Astrocyte of the cerebellum (primary cell): ENCODE measurements at regions of chr1 and their contacts with region 1.

Region 1: GRCh38 chr1:39098546-39099250 is 72.5 kb downstream of the NDUFS5 start:
- DNase-seq: peak; percentile 79
- H3K4me3 ChIP-seq: no peak overlapping the region
- CTCF ChIP-seq: peak; percentile 75

Region 2: GRCh38 chr1:38873027-38873969 is 225.4 kb before region 1 on chr1 and contains the start of gene MYCBP:
- in situ Hi-C with region 1: loop called (anchors 25 kb)
- DNase-seq: peak; percentile 87
- H3K4me3 ChIP-seq: peak within 1 kb of the TSS; percentile 73
- CTCF ChIP-seq: no peak

Region 3: DNA sequence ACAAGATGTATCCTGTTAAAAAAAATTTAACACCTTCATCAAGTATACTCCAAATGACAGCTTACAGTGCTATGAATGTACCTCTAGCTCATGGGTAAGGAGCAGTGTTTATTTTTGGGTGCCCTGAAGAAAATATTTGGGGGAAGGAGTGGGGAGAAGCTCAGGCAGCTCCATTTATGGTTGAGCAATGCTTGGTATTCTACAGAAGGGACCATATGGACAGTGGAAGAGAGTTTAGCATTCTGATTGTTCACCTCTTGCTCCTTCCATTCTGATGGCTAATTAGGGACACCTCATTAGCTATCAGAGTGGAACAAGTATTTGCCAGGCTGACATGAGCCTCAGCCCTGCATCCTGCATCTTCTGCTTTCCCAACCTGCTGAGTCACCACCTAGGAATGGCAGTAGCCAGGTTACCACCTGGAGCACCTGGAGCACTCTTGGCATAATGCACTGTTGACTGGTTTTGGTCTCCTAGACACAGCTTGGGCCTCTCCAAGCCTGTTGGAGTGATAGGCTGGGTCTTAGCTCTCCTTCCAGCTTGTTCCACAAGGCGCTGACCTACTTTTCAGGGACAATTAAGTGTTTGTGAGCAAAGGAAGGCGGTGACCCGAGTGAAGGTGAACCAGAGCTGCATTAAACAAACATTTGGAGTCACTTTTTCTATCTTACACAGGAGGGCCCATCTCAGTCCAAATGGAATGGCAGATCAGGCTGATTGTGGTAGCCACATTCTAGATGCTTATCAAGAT is 43.9 kb after region 1 on chr1:
- in situ Hi-C with region 1: no loop called
- DNase-seq: no peak
- H3K4me3 ChIP-seq: no peak overlapping the region
- CTCF ChIP-seq: no peak

Region 4: GRCh38 chr1:39158327-39159086 is 59.8 kb after region 1 on chr1:
- in situ Hi-C with region 1: loop called (anchors 5 kb)
- DNase-seq: peak; percentile 69
- H3K4me3 ChIP-seq: peak overlapping the region; percentile 4
- CTCF ChIP-seq: no peak